ENCODE measurements at regions of chr3 and their contacts with region 1.

Region 1: GRCh38 chr3:150870396-150870795 is 34.8 kb downstream of the MINDY4B start:
- H3K4me3 Mint-ChIP-seq: no peak overlapping the region
- H3K27ac Mint-ChIP-seq: no peak overlapping the region
- H3K4me1 Mint-ChIP-seq: peaks cover 9% of the 10 kb centered on the region
- H3K27me3 Mint-ChIP-seq: peaks cover 4% of the 10 kb centered on the region

Region 2: DNA sequence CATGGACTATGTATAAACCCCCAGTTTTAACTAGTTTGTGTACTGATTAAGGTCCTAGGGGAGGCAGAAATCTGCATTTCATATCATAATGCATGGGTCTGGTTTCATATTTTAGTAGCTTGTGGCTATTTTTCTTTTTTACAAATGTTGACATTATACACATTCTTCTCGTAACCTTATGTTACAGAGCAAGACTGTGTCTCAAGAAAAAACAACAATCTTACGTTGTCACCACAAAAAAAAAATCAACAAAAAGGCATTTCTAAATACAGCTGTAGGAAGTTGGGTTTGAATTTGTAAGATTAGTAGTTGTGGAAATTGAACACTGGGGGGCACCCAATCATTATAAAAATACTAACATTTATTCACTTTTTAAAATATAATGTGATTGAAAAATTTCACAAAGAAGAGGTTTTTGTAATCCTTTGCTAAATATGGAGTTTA is 342.0 kb before region 1 on chr3:
- intact Hi-C with region 1: loop called (anchors 2 kb)
- H3K4me3 Mint-ChIP-seq: no peak overlapping the region
- H3K27ac Mint-ChIP-seq: no peak overlapping the region
- H3K4me1 Mint-ChIP-seq: no peaks in the 10 kb centered on the region
- H3K27me3 Mint-ChIP-seq: peaks cover 7% of the 10 kb centered on the region

Region 3: GRCh38 chr3:150787741-150788370 is 82.5 kb before region 1 on chr3:
- intact Hi-C with region 1: loop called (anchors 5 kb)
- H3K4me3 Mint-ChIP-seq: no peak overlapping the region
- H3K27ac Mint-ChIP-seq: no peak overlapping the region
- H3K4me1 Mint-ChIP-seq: peaks cover 5% of the 10 kb centered on the region
- H3K27me3 Mint-ChIP-seq: peaks cover 12% of the 10 kb centered on the region

Region 4: DNA sequence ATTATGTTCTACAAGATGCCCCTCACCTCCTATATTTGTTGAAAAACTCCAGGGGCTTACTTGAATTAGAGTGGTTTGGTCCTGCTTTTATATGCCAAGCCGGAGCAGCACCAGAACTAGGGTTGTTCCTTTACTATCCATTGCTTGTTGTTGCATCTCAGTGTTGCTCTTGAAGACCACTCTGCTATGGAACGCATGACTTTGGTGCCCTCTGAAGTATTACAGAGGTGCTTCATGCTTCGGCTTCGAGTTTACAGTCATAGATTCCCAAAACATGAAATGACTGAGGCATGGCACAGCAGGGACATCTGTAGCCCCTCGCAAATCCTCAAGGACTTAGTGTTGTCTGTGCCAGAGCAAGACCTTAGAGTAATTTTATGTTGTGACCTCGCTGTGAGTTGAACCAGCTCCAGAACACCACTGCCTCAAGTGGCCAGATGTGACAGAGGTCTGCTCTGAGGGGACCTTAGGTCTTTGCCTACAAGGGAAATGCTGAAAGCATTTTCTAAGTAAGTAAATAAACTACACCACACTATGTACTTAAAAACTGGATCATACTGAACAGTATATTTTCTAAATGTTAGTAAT is 40.2 kb before region 1 on chr3:
- intact Hi-C with region 1: no loop called
- H3K4me3 Mint-ChIP-seq: no peak overlapping the region
- H3K27ac Mint-ChIP-seq: no peak overlapping the region
- H3K4me1 Mint-ChIP-seq: no peaks in the 10 kb centered on the region
- H3K27me3 Mint-ChIP-seq: no peaks in the 10 kb centered on the region

Measured in dendritic cell treated with granulocyte-macrophage colony-stimulating factor and Interleukin-4, amounts not matched to agents 40 ng/mL and 50 ng/mL, for 4 days (primary cell).